Spleen (tissue), 13 donors: ENCODE measurements at regions of chr1 and their contacts with region 1.

Region 1: GRCh38 chr1:205591522-205592351 is 40.1 kb downstream of the ELK4 start:
- DNase-seq: peak; percentile 96
- H3K4me3 ChIP-seq: peak overlapping the region; percentile 4 to 67 (median 41)
- H3K27ac ChIP-seq: peak overlapping the region; percentile 9 to 78 (median 72)
- H3K4me1 ChIP-seq: peaks cover 0 to 60% (median 36%) of the 10 kb centered on the region in 6 donors
- H3K27me3 ChIP-seq: no peaks in the 10 kb centered on the region
- CTCF ChIP-seq: peak; percentile 86 to 98 (median 96)
- POLR2A ChIP-seq: no peak

Region 2: GRCh38 chr1:205407970-205408369 is 183.8 kb before region 1 on chr1:
- intact Hi-C with region 1: no loop called
- DNase-seq: no peak
- H3K4me3 ChIP-seq: no peak overlapping the region
- H3K27ac ChIP-seq: no peak overlapping the region
- H3K4me1 ChIP-seq: no peaks in the 10 kb centered on the region
- H3K27me3 ChIP-seq: peaks cover 0 to 16% (median 4%) of the 10 kb centered on the region in 7 donors
- CTCF ChIP-seq: no peak
- POLR2A ChIP-seq: no peak

Region 3: DNA sequence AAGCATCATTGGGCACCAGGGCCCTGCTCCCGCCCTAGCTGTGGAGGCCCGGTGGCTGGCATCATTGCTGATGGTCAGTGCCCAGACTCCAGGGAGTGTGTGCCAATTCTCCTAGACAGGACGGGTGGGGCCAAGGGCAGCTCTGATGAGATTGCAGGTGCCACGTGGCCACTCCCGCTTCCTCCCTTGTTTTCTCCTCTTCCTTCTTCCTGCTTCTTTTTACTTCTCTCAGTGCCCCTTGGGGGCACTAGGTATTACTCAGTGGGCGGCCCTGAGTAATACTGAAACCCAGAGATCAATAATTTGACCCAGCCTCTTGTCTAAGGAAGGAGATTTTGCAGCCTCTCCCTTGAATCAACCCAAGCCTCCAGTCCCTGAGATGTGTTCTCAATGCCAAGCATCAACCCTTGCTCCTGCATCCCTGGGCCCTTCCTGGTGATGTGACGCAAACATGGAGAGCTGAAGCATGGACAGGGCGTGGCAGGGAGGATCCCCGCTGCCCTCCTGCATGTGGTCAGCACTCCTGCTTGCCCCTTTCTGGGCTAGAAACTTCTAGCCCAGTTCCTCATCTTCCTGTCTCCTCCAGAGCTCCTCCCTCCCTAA is 54.9 kb before region 1 on chr1:
- intact Hi-C with region 1: loop called (anchors 10 kb)
- DNase-seq: no peak
- H3K4me3 ChIP-seq: no peak overlapping the region
- H3K27ac ChIP-seq: no peak overlapping the region
- H3K4me1 ChIP-seq: peaks cover 6 to 21% (median 11%) of the 10 kb centered on the region in 6 donors
- H3K27me3 ChIP-seq: peaks cover 0 to 23% (median 0%) of the 10 kb centered on the region in 7 donors
- CTCF ChIP-seq: no peak
- POLR2A ChIP-seq: no peak

Region 4: DNA sequence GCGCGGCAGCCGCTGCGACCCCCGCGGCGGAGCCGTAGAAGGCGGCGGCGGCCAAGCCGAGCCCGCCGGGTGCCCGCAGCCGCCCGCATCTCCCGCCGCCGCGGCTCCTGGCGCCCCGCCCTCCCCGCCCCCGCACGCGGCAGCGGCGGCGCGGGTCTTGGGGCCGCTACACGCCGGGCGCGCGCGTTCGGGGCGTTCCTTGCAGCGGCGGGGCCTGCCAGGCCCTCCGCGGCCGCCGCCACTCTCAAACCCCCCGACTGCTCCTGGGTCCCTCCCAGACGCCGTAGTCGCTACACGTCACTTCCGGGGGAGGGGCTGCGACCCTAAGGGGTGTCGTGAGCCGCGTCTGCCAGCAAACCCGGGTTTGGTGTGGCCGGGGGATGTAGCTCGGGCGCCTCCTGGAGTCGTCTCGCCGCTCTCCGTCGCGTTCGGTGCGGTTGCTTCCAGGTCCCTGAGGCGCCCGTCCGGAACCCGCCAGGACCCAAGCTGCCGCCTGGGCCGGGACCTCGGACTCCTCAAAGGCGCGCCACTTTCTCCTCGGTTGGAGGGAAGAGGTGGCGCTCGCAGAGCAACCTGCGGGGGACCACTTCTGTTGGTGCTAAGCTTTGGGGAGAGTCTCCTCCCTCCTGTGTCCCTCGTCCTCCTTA is 40.1 kb after region 1 on chr1 and contains the start of gene ELK4:
- intact Hi-C with region 1: loop called (anchors 5 kb)
- DNase-seq: peak; percentile 100
- H3K4me3 ChIP-seq: peak within 1 kb of the TSS; percentile 48 to 81 (median 64)
- H3K27ac ChIP-seq: peak within 1 kb of the TSS; percentile 94 to 99 (median 96)
- H3K4me1 ChIP-seq: peaks cover 30 to 55% (median 47%) of the 10 kb centered on the region in 6 donors
- H3K27me3 ChIP-seq: no peaks in the 10 kb centered on the region
- CTCF ChIP-seq: peak; percentile 63 to 89 (median 78)
- POLR2A ChIP-seq: peak; percentile 60 to 90 (median 85)
- total RNA-seq, gene ELK4: 50.9 to 109 (median 102) TPM

Region 5: DNA sequence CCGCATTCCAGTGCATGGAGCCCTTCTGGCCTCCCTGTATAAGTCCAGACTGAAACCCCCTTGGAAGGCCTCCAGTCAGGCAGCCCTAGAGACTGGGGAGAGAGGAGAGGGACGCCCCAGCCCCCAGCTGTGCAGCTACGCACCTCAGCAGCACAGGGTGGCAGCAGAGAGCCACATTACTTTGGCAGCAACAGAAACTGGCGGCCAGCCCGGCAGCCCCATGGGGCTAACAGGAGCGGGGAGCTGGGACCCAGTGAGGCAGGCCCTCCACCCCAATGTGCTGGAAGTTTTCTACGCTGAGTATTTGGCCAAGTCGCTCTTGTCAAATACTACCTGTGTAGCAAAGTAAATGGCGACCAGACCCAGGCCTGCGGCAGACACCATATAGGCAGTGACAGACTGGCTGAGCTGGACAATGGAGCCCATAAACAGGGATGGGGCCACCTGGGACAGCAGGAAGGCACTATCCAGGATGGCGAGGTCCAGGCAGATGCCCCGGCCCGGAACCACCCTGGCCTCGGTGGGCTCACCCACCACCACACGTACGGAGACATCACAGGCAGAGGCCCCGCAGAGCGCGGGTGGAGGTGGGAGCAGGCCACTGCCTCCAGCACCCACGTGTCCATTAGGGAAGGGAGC is 67.3 kb after region 1 on chr1:
- intact Hi-C with region 1: loop called (anchors 5 kb)
- DNase-seq: peak; percentile 93
- H3K4me3 ChIP-seq: no peak overlapping the region
- H3K27ac ChIP-seq: peak overlapping the region in 3 of 8 donors; percentile 26 to 56 (median 43)
- H3K4me1 ChIP-seq: peaks cover 7 to 66% (median 35%) of the 10 kb centered on the region in 6 donors
- H3K27me3 ChIP-seq: no peaks in the 10 kb centered on the region
- CTCF ChIP-seq: peak; percentile 75 to 93 (median 90)
- POLR2A ChIP-seq: no peak

Region 6: DNA sequence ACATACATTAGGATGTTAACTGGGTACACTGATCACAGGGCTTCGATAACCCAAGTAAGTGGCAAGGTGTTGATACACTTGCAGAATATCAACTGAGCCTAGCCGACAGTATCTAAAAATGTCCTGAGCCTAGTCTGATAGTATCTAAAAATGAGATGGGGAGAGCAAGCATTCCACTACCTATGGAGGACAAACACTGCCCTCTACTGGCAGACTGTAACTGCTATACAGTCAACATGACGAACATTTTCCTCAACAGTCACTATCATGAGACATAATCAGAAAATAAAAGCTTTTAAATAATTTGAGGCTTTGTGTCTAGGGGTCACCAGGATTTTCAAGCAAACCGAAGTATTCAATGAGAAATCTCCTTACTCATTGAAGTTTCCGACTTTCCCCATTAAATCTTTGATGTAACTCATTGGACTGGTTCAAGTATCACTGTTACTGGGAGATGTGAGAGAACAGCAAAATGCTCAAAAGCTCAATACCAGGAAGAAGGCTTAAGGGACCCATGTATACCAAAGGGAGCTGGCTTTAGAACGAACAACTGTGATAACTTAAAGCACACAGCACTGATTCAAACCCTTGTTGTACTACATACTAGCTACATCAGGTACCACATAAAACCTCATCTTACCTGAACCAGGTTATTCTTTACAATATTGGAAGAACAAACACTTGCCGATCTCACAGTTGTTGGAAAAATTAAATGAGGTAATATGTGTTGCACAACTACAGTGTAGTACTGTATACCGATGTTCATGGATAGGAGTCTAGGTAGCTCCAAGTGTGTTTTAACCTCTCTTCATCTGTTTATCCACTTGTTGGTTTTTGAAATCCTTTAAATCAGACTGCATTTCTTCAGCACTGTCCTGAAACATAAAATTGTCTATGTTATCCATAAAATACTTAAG is 119.6 kb after region 1 on chr1:
- intact Hi-C with region 1: loop called (anchors 5 kb)
- DNase-seq: no peak
- H3K4me3 ChIP-seq: no peak overlapping the region
- H3K27ac ChIP-seq: peak overlapping the region in 1 of 8 donors; percentile 24
- H3K4me1 ChIP-seq: peaks cover 2 to 80% (median 25%) of the 10 kb centered on the region in 6 donors
- H3K27me3 ChIP-seq: no peaks in the 10 kb centered on the region
- CTCF ChIP-seq: peak; percentile 71 to 90 (median 82)
- POLR2A ChIP-seq: no peak